ENCODE measurements at regions of chr17 and their contacts with region 1.

Region 1: GRCh38 chr17:39730095-39730921 is at the start of gene MIEN1:
- DNase-seq: peak; percentile 90
- H3K4me3 Mint-ChIP-seq: peak within 1 kb of the TSS; percentile 92
- H3K27ac Mint-ChIP-seq: peak within 1 kb of the TSS; percentile 85
- H3K4me1 Mint-ChIP-seq: peaks cover 11% of the 10 kb centered on the region
- H3K27me3 Mint-ChIP-seq: peaks cover 7% of the 10 kb centered on the region
- total RNA-seq, gene MIEN1: 33.3 and 37.1 TPM in 2 replicates

Region 2: DNA sequence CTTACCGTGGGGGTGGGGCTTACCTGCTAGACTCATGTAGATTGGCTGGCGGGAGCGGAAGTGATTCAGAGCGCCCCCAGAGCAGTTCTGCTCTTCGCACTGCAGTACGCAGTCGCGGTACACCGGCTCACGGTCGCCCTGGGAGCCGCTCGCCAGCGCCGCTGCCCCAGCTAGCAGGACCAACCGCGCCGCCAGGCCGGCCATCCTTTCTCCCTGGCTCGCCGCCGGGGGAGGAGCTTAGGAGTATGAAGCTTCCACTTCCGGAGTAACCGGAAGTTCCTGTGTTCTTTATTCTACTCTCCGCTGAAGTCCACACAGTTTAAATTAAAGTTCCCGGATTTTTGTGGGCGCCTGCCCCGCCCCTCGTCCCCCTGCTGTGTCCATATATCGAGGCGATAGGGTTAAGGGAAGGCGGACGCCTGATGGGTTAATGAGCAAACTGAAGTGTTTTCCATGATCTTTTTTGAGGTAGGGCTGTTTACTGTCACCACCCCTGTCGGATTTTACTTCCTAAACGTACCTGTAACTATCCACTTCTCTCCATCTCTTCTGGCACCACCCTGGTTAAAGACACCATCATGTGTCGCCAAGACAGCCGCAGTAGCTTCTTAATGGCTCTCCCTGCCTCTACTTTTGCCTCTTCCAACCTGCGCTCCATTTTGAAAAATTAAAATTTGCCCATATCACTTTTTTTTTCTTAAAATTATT is 42.3 kb before region 1 on chr17 and contains the start of gene PGAP3:
- intact Hi-C with region 1: loop called (anchors 1 kb)
- DNase-seq: peak; percentile 73
- H3K4me3 Mint-ChIP-seq: peak within 1 kb of the TSS; percentile 94
- H3K27ac Mint-ChIP-seq: peak within 1 kb of the TSS; percentile 69
- H3K4me1 Mint-ChIP-seq: peaks cover 22% of the 10 kb centered on the region
- H3K27me3 Mint-ChIP-seq: no peaks in the 10 kb centered on the region
- total RNA-seq, gene PGAP3: 14.4 and 16.9 TPM in 2 replicates

Measured in activated T-helper 1 cell treated with anti-CD3 and anti-CD28 coated beads, Interleukin-12 subunit alpha, Interleukin-12 subunit beta, Interleukin-2, Interleukin-4 antibody, amounts not matched to agents 30 ng/mL and 10 ng/mL and 1 ng/mL, durations not matched to agents 14 hours and 24 hours and 36 hours (primary cell).